ENCODE measurements at regions of chr5 and their contacts with region 1.

Region 1: DNA sequence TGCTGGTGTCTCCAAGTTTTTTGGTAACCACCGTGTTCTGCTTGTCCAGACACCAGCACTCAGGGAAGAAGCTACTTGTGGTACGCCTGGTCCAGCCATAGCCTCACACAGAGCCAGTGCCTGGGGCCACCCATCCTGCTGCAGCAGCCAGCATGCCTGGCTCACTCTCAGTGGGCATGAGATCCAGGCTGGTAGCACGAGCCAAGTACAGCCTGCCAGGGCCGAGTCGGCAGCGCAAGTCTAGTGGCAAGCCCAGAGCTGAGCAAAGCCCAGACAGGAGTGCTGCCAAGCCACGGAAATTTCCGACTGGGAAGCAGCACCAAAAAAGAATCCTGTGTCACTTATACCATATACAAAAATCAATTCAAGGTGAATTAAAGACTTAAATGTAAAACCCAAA is 36.3 kb upstream of the FBXL17 start:
- DNase-seq: no peak
- H3K4me3 ChIP-seq: no peak overlapping the region
- H3K27ac ChIP-seq: no peak overlapping the region
- H3K4me1 ChIP-seq: no peaks in the 10 kb centered on the region
- H3K27me3 ChIP-seq: no peaks in the 10 kb centered on the region
- CTCF ChIP-seq: no peak
- EP300 ChIP-seq: no peak
- POLR2A ChIP-seq: no peak

Region 2: DNA sequence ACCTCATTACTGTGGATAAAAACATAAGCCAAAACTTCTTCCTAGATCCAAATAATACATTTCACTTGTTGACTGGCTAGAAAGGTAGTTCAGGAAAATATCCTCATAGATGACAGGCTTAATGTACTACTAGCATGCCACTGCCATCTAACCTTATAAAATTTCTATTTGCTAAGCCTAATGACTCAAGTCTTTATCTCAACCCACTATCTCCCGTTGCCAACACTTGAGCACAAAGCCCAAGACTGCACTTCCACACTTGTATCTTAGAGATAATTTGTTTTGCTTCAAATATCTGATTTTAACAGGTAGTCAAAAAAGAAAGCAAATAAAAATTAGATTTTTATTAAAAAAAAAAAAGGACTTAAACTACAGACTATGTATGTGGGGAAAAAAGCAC is 79.0 kb before region 1 on chr5:
- intact Hi-C with region 1: loop called in 1 of 4 experiments (anchors 5 kb)
- DNase-seq: no peak
- H3K4me3 ChIP-seq: no peak overlapping the region
- H3K27ac ChIP-seq: no peak overlapping the region
- H3K4me1 ChIP-seq: no peaks in the 10 kb centered on the region
- H3K27me3 ChIP-seq: no peaks in the 10 kb centered on the region
- CTCF ChIP-seq: no peak
- EP300 ChIP-seq: no peak
- POLR2A ChIP-seq: no peak

Region 3: GRCh38 chr5:108541836-108542235 is 123.6 kb after region 1 on chr5:
- intact Hi-C with region 1: no loop called
- DNase-seq: no peak
- H3K4me3 ChIP-seq: no peak overlapping the region
- H3K27ac ChIP-seq: no peak overlapping the region
- H3K4me1 ChIP-seq: no peaks in the 10 kb centered on the region
- H3K27me3 ChIP-seq: no peaks in the 10 kb centered on the region
- CTCF ChIP-seq: no peak
- EP300 ChIP-seq: no peak
- POLR2A ChIP-seq: no peak

Region 4: GRCh38 chr5:108642167-108642906 is 224.1 kb after region 1 on chr5:
- intact Hi-C with region 1: no loop called
- DNase-seq: peak in 1 of 5 donors; percentile 20
- H3K4me3 ChIP-seq: no peak overlapping the region
- H3K27ac ChIP-seq: no peak overlapping the region
- H3K4me1 ChIP-seq: no peaks in the 10 kb centered on the region
- H3K27me3 ChIP-seq: no peaks in the 10 kb centered on the region
- CTCF ChIP-seq: no peak
- EP300 ChIP-seq: no peak
- POLR2A ChIP-seq: no peak

Measured in ovary (tissue), 10 donors.